ENCODE measurements at regions of chr3 and their contacts with region 1.

Region 1: GRCh38 chr3:15332405-15333098 is at the start of gene SH3BP5:
- DNase-seq: peak; percentile 85
- H3K4me3 ChIP-seq: peak within 1 kb of the TSS; percentile 50 to 79 (median 72)
- H3K27ac ChIP-seq: peak within 1 kb of the TSS; percentile 77 to 82 (median 81)
- H3K4me1 ChIP-seq: peaks cover 0 to 14% (median 8%) of the 10 kb centered on the region in 4 donors
- H3K27me3 ChIP-seq: no peaks in the 10 kb centered on the region
- CTCF ChIP-seq: peak in 3 of 4 experiments; percentile 17 to 75 (median 31)
- EP300 ChIP-seq: no peak
- POLR2A ChIP-seq: no peak
- total RNA-seq, gene SH3BP5: 25.1 to 40.4 (median 31.9) TPM

Region 2: GRCh38 chr3:15205934-15206661 is 126.5 kb before region 1 on chr3 and contains the start of gene CAPN7:
- intact Hi-C with region 1: loop called (anchors 5 kb)
- DNase-seq: peak; percentile 98
- H3K4me3 ChIP-seq: peak within 1 kb of the TSS; percentile 90 to 96 (median 94)
- H3K27ac ChIP-seq: peak within 1 kb of the TSS; percentile 97 to 99 (median 98)
- H3K4me1 ChIP-seq: peaks cover 0 to 38% (median 30%) of the 10 kb centered on the region in 4 donors
- H3K27me3 ChIP-seq: no peaks in the 10 kb centered on the region
- CTCF ChIP-seq: peak; percentile 7 to 47 (median 40)
- EP300 ChIP-seq: no peak
- POLR2A ChIP-seq: peak; percentile 35 to 60
- total RNA-seq, gene CAPN7: 52.8 to 70.8 (median 58.6) TPM

Region 3: GRCh38 chr3:15268033-15268631 is 64.4 kb before region 1 on chr3:
- intact Hi-C with region 1: loop called (anchors 2 kb)
- DNase-seq: peak; percentile 94
- H3K4me3 ChIP-seq: no peak overlapping the region
- H3K27ac ChIP-seq: peak overlapping the region; percentile 56 to 73 (median 64)
- H3K4me1 ChIP-seq: peaks cover 0 to 31% (median 21%) of the 10 kb centered on the region in 4 donors
- H3K27me3 ChIP-seq: no peaks in the 10 kb centered on the region
- CTCF ChIP-seq: peak; percentile 78 to 93 (median 88)
- EP300 ChIP-seq: no peak
- POLR2A ChIP-seq: no peak

Region 4: DNA sequence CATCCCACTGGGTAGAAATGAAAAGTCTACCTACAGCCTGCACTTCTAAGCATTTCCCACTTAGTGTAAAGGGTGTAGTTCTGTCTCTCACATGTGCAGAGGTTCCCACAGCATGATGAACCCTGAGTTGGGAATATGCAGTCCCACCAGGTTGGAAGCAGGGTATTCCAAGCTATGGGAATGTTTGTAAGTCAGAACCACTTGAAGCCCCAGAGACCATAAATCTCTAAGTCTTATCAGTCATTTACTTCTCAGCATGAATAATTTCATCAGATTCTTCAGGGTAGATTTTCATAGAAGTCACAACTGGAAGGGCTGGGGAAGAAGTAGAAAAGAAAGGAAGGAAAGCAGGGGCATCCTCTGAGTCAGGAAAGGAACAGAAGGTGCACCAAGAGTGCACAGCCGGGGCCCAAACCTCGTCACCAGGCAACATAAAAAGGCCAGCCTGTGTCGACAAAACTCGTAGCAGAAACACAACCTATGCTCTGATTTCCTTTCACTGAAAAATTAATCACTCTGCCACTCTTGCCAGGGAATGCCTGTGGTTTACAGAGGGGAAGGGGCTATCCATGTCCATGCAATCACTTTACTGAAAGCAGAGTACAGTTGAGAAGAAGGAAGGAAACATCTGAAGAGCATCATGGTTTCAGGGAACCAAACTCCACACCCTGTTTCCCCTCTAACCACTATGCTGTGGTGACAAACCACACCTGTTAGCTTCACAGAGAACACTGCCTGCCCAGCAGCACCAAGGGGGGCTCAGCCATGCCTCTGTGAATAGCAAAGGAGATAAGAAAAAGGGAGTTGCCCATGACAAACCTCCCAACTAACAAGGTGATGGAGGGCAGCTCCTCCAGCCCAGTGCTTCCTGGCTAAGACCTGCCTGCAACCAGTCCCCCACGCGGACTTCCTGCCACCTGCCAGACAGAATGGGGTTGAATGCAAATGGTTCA is 40.7 kb before region 1 on chr3:
- intact Hi-C with region 1: loop called (anchors 5 kb)
- DNase-seq: peak; percentile 62
- H3K4me3 ChIP-seq: no peak overlapping the region
- H3K27ac ChIP-seq: peak overlapping the region; percentile 72 to 75 (median 72)
- H3K4me1 ChIP-seq: peaks cover 0 to 36% (median 29%) of the 10 kb centered on the region in 4 donors
- H3K27me3 ChIP-seq: no peaks in the 10 kb centered on the region
- CTCF ChIP-seq: no peak
- EP300 ChIP-seq: peak in 1 of 4 donors; percentile 31
- POLR2A ChIP-seq: no peak

Region 5: GRCh38 chr3:15377961-15378791 is 45.6 kb after region 1 on chr3:
- intact Hi-C with region 1: loop called (anchors 5 kb)
- DNase-seq: peak; percentile 97
- H3K4me3 ChIP-seq: no peak overlapping the region
- H3K27ac ChIP-seq: peak overlapping the region; percentile 43 to 68 (median 50)
- H3K4me1 ChIP-seq: peaks cover 0 to 5% (median 0%) of the 10 kb centered on the region in 4 donors
- H3K27me3 ChIP-seq: no peaks in the 10 kb centered on the region
- CTCF ChIP-seq: peak; percentile 61 to 87 (median 70)
- EP300 ChIP-seq: peak in 3 of 4 donors; percentile 34 to 76 (median 70)
- POLR2A ChIP-seq: no peak